GM18951 (cell line): ENCODE measurements at regions of chr9 and their contacts with region 1.

Region 1: DNA sequence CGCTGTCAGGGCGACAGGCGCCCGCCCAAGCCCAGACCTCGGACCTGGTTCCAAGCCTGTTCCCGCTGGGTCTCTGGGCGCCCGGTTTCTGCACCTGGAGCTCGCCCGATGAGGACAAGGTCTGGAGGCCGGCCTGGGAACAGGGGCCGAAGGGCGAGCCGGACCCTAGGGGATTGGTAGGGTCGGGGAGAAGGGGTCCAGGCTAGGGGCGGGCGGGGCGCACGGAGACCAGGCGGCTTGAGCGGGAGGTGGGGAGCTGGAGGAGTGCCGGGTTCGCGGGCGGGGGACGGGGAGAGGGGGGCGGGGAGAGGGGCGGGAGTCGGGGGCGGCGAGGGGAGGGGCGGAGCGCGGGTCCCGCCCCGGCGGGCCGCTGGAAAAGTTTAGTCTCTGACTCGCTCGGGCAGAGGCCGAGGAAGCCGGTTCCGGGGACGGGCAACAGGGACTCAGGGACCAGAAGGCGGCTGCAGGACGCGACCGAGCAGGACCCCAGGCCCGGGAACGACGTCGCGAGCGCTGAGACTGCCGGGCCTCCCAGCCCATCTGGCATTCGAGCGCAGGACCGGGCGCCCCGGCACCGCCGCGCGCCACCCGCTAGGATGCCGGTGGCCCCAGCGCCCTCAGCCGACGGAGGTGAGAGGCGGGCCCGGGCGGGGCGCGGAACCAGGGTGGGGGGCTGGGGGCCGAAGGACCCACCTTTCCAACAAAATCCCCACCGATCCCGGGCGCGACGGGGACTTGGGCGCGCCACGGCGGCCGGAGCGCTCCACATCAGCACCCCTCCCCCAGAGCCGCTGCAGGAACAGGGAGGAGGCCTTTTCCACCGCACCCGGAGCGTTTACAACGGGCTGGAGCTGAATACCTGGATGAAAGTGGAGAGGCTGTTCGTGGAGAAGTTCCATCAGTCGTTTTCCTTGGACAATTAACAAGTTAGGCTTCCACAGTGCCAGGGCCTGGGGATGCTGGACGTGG is at the start of gene S1PR3:
- POLR2A ChIP-seq: no peak

Region 2: DNA sequence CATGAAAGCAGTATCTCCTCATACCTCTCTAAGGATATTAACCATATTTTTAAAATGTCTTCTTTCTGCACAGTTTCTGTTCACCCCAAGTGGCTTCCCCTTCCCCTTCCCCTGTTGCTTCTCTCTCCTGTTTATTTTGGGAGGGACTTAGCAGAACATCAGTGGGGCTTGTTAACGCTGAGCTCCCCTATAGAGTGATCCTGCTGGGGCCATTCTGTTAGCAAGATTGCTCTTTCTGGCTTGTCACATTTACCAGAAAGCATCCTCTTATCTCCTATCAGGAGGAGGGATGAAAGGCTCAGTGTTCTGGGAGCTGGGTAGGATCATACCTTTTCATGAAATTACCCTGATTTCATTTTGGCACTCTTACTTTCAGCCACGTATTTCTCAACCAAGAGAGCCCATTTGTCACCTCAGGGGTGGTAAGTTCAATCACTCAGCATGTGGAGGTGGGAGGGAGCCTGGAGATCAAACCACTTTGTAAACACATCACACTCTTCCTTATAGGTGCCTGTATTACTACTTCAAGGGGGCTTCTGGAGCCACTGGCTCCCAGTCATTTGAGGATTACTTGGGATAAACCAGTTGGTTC is 439.7 kb before region 1 on chr9:
- in situ Hi-C with region 1: no loop called
- POLR2A ChIP-seq: no peak

Region 3: GRCh38 chr9:88605512-88606362 is 385.6 kb before region 1 on chr9:
- in situ Hi-C with region 1: loop called (anchors 10 kb)
- POLR2A ChIP-seq: no peak

Region 4: DNA sequence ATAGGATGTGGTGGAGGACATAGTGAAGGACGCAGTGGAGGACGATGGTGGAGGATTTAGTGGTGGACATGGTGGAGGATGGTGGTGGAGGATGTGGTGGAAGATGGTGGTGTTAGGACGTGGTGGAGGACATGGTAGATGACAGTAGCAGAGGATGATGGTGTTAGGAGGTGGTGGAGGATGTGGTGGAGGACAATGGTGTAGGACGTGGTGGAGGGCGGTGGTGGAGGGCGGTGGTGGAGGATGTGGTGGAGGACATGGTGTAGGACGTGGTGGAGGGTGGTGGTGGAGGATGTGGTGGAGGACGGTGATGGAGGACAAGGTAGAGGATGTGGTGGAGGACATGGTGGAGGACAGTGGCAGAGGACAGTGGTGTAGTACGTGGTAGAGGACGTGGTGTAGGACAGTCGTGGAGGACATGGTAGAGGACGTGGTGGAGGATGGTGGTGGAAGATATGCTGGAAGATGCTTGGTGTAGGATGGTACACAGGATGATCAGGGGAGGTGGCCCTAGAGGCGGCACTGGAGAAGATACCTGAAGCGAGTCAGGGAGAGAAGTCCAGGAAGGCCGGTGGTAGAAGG is 68.7 kb after region 1 on chr9:
- in situ Hi-C with region 1: no loop called
- POLR2A ChIP-seq: no peak

Region 5: DNA sequence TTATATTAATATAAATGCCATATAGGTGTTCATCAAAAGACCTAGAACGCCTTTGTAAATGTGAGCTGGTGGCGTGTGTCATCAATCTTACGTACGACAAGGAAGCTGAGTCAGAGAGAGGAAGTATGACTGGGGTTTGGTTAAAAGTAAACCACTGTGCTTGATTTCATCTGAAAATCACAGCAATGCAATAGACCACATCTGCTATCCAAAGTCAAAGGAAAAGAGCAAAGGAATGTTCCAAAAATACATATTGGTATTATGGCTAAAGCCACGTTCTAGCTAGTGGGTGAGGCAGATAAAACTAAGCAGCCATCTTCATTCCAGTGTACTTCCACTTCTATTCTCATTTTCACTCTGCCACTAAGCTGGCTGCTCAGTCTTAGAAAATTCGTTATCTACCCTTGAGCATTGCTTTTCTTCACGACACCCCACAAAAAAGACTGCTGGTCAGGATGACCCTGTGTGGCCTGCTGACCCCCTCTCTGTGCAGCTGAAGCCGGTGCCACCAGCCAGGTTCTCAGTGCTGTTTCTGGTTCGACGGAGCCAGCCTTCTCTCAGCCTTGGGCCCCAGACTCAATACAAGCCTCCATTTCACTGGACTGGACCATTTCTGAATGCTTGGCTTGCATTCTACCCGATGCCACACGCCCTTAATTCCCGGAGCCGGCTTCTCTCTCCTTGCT is 163.4 kb after region 1 on chr9:
- in situ Hi-C with region 1: no loop called
- POLR2A ChIP-seq: no peak